Activated naive CD4-positive, alpha-beta T cell treated with anti-CD3 and anti-CD28 coated beads, Interleukin-2, amount 10 ng/mL, durations not matched to agents 7 days and 5 days (primary cell): ENCODE measurements at regions of chr20 and their contacts with region 1.

Region 1: GRCh38 chr20:40962730-40963504 is 65.7 kb upstream of the TOP1 start:
- DNase-seq: peak; percentile 79
- H3K4me3 Mint-ChIP-seq: no peak overlapping the region
- H3K27ac Mint-ChIP-seq: no peak overlapping the region
- H3K4me1 Mint-ChIP-seq: peaks cover 11% of the 10 kb centered on the region
- H3K27me3 Mint-ChIP-seq: peaks cover 10% of the 10 kb centered on the region

Region 2: GRCh38 chr20:40741507-40742106 is 221.3 kb before region 1 on chr20:
- CTCF ChIA-PET with region 1: interaction called, 84 read pairs
- DNase-seq: peak; percentile 61
- H3K4me3 Mint-ChIP-seq: no peak overlapping the region
- H3K27ac Mint-ChIP-seq: no peak overlapping the region
- H3K4me1 Mint-ChIP-seq: no peaks in the 10 kb centered on the region
- H3K27me3 Mint-ChIP-seq: peaks cover 31% of the 10 kb centered on the region

Region 3: GRCh38 chr20:40797425-40797824 is 165.5 kb before region 1 on chr20:
- CTCF ChIA-PET with region 1: interaction called, 22 read pairs
- DNase-seq: no peak
- H3K4me3 Mint-ChIP-seq: no peak overlapping the region
- H3K27ac Mint-ChIP-seq: no peak overlapping the region
- H3K4me1 Mint-ChIP-seq: no peaks in the 10 kb centered on the region
- H3K27me3 Mint-ChIP-seq: peaks cover 29% of the 10 kb centered on the region

Region 4: GRCh38 chr20:40868551-40869217 is 94.2 kb before region 1 on chr20:
- CTCF ChIA-PET with region 1: no interaction called
- DNase-seq: no peak
- H3K4me3 Mint-ChIP-seq: no peak overlapping the region
- H3K27ac Mint-ChIP-seq: no peak overlapping the region
- H3K4me1 Mint-ChIP-seq: no peaks in the 10 kb centered on the region
- H3K27me3 Mint-ChIP-seq: peaks cover 12% of the 10 kb centered on the region

Region 5: DNA sequence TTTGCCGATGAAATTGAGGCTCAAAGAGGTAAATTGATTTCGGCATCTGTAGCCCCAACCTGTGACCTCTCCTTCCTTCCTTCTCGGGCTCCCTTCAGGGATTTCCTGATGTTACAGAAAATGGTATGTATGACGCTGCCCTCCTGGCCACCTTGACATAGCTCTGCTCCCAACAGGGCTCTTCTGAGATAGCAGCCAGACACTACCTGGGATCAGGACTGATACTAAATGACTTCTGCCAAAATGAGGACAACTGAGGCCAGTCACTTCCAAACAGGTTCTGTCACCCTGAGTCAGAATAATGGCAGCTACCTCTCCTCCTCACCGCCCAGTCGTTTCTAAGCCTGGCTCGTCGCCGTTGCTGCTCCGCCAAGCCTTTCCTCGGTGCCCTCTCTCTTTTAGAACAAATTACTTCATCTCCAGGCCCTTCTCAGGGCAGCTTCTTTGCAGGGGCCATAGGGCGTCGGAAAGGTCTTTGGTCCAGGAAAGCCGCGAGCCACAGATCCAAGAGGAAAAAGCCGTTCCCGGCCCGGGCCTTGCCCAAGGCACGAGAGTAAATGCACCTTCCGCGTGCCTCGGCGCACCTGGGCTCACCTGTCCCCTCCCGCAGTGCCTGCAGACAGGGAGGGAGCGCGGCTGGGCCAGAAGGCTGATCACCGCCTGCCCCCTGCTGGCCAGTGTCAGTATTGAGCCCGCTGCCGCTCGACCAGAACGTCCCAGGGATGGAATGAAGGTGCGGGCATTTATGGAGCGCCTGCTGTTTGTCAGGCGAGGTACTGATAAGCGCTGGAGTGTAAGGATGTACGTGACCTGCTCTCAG is 376.8 kb after region 1 on chr20:
- CTCF ChIA-PET with region 1: interaction called, 12 read pairs
- DNase-seq: peak; percentile 88
- H3K4me3 Mint-ChIP-seq: peak overlapping the region; percentile 58
- H3K27ac Mint-ChIP-seq: no peak overlapping the region
- H3K4me1 Mint-ChIP-seq: peaks cover 13% of the 10 kb centered on the region
- H3K27me3 Mint-ChIP-seq: peaks cover 36% of the 10 kb centered on the region